Naive thymus-derived CD4-positive, alpha-beta T cell (primary cell): ENCODE measurements at regions of chr7 and their contacts with region 1.

Region 1: DNA sequence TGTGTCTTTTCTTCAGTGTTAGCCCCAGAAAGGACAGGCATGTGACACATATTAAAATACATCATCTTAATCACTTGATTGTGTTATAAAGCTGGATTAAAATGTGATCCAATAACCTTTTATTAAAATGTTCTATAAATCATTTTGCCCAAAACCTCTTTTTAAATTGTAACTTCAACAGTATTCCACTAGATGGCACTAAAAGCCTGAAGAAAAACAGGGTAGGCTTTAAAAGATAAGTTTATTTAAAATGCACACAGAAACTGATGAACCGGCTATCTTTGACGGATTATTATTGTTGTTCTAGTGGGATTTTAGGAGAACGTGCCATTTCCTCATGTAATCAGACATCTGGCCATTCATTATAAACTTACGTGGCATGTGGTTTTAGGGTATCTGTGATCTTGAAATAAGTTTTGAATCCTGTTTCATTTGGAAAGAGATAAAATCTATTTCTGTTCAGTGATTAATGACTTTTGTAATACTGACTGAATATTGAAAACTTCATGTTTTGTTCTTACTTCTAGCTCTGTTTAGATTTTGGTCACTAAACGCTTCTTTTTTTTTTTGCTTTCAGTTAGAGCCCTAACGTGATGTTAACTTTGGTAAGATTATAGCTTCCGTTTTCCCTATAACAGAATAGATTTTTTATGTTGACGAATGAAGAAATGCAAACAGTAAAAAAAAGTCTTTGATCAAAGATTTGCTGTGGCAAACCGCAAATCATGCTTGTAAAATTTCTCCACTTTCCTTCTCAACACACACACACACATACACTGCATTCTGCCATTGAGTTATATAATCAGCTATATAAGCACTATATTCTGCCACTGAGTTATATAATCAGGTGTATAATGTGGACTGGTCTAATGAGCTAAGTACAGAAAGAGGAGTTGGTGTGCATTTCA is 13.6 kb downstream of the VPS50 start:
- DNase-seq: peak in 5 of 9 donors; percentile 30 to 44 (median 33)
- ATAC-seq: peak; percentile 75
- H3K4me3 ChIP-seq: no peak overlapping the region
- H3K4me3 Mint-ChIP-seq: peak overlapping the region in 7 of 10 donors; percentile 10 to 55 (median 38)
- H3K27ac ChIP-seq: no peak overlapping the region
- H3K27ac Mint-ChIP-seq: peak overlapping the region in 2 of 9 donors; percentile 10 to 51
- H3K4me1 ChIP-seq: no peaks in the 10 kb centered on the region
- H3K4me1 Mint-ChIP-seq: peaks cover 0 to 39% (median 19%) of the 10 kb centered on the region in 7 donors
- H3K27me3 ChIP-seq: no peaks in the 10 kb centered on the region
- H3K27me3 Mint-ChIP-seq: no peaks in the 10 kb centered on the region

Region 2: DNA sequence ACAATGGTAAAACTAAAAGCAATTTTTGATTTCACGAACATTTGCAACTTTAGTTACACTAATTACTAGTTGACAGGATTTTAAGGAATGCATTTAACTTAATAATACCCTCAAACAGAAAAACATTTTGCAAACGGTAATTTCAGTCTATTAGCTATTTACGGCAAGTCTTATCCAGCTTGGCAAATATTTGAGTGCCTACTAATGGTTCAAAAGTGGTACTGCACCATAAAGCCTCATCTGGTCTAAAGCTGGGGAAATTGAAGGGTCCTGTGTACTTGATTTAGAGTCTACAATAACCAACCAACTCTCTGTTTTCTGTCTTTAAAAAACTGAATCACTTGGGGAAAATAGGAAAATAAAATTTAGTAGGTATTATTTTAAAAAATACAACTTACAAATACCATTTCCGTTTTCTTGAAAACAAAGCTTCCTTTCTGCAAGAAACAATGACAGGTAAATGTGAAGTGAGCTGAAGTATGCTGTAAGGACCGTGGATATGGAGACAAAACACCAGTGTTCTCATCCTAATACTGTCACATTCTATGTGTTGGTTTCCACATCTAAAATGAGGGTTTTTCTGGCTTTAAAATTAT is 128.7 kb after region 1 on chr7:
- CTCF ChIA-PET with region 1: no interaction called
- POLR2A ChIA-PET with region 1: no interaction called
- intact Hi-C with region 1: loop called in 1 of 2 experiments (anchors 1 kb)
- DNase-seq: no peak
- ATAC-seq: no peak
- H3K4me3 ChIP-seq: no peak overlapping the region
- H3K4me3 Mint-ChIP-seq: no peak overlapping the region
- H3K27ac ChIP-seq: no peak overlapping the region
- H3K27ac Mint-ChIP-seq: no peak overlapping the region
- H3K4me1 ChIP-seq: peaks cover 0 to 3% of the 10 kb centered on the region in 2 donors
- H3K4me1 Mint-ChIP-seq: no peaks in the 10 kb centered on the region
- H3K27me3 ChIP-seq: no peaks in the 10 kb centered on the region
- H3K27me3 Mint-ChIP-seq: peaks cover 12 to 43% (median 18%) of the 10 kb centered on the region in 5 donors

Region 3: GRCh38 chr7:93442478-93443224 is 196.9 kb after region 1 on chr7:
- CTCF ChIA-PET with region 1: no interaction called
- POLR2A ChIA-PET with region 1: no interaction called
- intact Hi-C with region 1: loop called in 1 of 2 experiments (anchors 10 kb)
- DNase-seq: peak in 6 of 9 donors; percentile 2 to 34 (median 13)
- ATAC-seq: peak; percentile 34
- H3K4me3 ChIP-seq: no peak overlapping the region
- H3K4me3 Mint-ChIP-seq: no peak overlapping the region
- H3K27ac ChIP-seq: no peak overlapping the region
- H3K27ac Mint-ChIP-seq: no peak overlapping the region
- H3K4me1 ChIP-seq: no peaks in the 10 kb centered on the region
- H3K4me1 Mint-ChIP-seq: no peaks in the 10 kb centered on the region
- H3K27me3 ChIP-seq: no peaks in the 10 kb centered on the region
- H3K27me3 Mint-ChIP-seq: peaks cover 0 to 4% (median 0%) of the 10 kb centered on the region in 5 donors

Region 4: GRCh38 chr7:93551063-93551904 is 305.5 kb after region 1 on chr7:
- CTCF ChIA-PET with region 1: no interaction called
- POLR2A ChIA-PET with region 1: no interaction called
- intact Hi-C with region 1: loop called in 1 of 2 experiments (anchors 2 kb)
- DNase-seq: no peak
- ATAC-seq: peak; percentile 31
- H3K4me3 ChIP-seq: no peak overlapping the region
- H3K4me3 Mint-ChIP-seq: no peak overlapping the region
- H3K27ac ChIP-seq: no peak overlapping the region
- H3K27ac Mint-ChIP-seq: no peak overlapping the region
- H3K4me1 ChIP-seq: no peaks in the 10 kb centered on the region
- H3K4me1 Mint-ChIP-seq: no peaks in the 10 kb centered on the region
- H3K27me3 ChIP-seq: no peaks in the 10 kb centered on the region
- H3K27me3 Mint-ChIP-seq: peaks cover 0 to 11% (median 0%) of the 10 kb centered on the region in 5 donors

Region 5: GRCh38 chr7:93902777-93903423 is 657.1 kb after region 1 on chr7:
- CTCF ChIA-PET with region 1: no interaction called
- POLR2A ChIA-PET with region 1: no interaction called
- intact Hi-C with region 1: loop called in 1 of 2 experiments (anchors 10 kb)
- DNase-seq: no peak
- ATAC-seq: peak; percentile 36
- H3K4me3 ChIP-seq: no peak overlapping the region
- H3K4me3 Mint-ChIP-seq: no peak overlapping the region
- H3K27ac ChIP-seq: no peak overlapping the region
- H3K27ac Mint-ChIP-seq: no peak overlapping the region
- H3K4me1 ChIP-seq: no peaks in the 10 kb centered on the region
- H3K4me1 Mint-ChIP-seq: no peaks in the 10 kb centered on the region
- H3K27me3 ChIP-seq: no peaks in the 10 kb centered on the region
- H3K27me3 Mint-ChIP-seq: peaks cover 7 to 35% (median 13%) of the 10 kb centered on the region in 5 donors

Region 6: GRCh38 chr7:94087664-94088352 is 842.0 kb after region 1 on chr7:
- CTCF ChIA-PET with region 1: interaction called, 13 read pairs
- POLR2A ChIA-PET with region 1: no interaction called
- intact Hi-C with region 1: loop called (anchors 1 kb)
- DNase-seq: peak in 8 of 9 donors; percentile 27 to 62 (median 46)
- ATAC-seq: peak; percentile 88
- H3K4me3 ChIP-seq: peak overlapping the region; percentile 43
- H3K4me3 Mint-ChIP-seq: peak overlapping the region; percentile 58 to 81 (median 74)
- H3K27ac ChIP-seq: no peak overlapping the region
- H3K27ac Mint-ChIP-seq: peak overlapping the region in 3 of 9 donors; percentile 8 to 70 (median 22)
- H3K4me1 ChIP-seq: no peaks in the 10 kb centered on the region
- H3K4me1 Mint-ChIP-seq: peaks cover 4 to 7% (median 5%) of the 10 kb centered on the region in 7 donors
- H3K27me3 ChIP-seq: no peaks in the 10 kb centered on the region
- H3K27me3 Mint-ChIP-seq: peaks cover 18 to 55% (median 38%) of the 10 kb centered on the region in 5 donors

Region 7: DNA sequence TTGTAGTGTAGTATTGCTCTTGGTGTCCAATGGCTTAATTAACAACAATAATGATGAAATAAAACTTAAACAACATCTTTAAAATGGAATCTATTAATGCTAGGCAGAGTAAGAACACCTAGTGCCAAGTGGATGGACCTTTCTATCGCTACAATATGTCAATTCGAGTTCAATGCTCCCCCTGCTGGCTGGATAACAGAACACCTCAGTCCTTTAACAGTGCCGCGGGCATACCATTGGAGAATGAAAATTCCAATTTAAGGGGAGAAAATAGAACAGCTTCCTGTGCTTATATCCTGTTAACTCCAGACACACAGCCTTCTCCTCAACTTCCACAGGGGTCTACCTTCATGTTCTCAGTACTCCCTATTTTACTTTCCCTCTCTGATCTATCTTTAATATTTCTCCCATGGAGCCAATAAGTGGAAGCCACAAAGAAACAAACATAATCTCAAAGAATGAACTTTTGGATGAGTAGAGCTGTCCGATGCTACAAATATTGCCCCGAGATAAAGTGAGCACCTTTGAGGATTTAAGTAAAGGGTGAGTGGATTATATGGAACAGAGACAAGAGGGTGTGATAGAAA is 1190.3 kb after region 1 on chr7:
- CTCF ChIA-PET with region 1: no interaction called
- POLR2A ChIA-PET with region 1: no interaction called
- intact Hi-C with region 1: loop called in 1 of 2 experiments (anchors 1 kb)
- DNase-seq: peak in 7 of 9 donors; percentile 7 to 50 (median 36)
- ATAC-seq: peak; percentile 74
- H3K4me3 ChIP-seq: no peak overlapping the region
- H3K4me3 Mint-ChIP-seq: no peak overlapping the region
- H3K27ac ChIP-seq: no peak overlapping the region
- H3K27ac Mint-ChIP-seq: no peak overlapping the region
- H3K4me1 ChIP-seq: no peaks in the 10 kb centered on the region
- H3K4me1 Mint-ChIP-seq: peaks cover 0 to 3% (median 0%) of the 10 kb centered on the region in 7 donors
- H3K27me3 ChIP-seq: no peaks in the 10 kb centered on the region
- H3K27me3 Mint-ChIP-seq: peaks cover 22 to 30% (median 23%) of the 10 kb centered on the region in 5 donors